ENCODE measurements at regions of chr19 and their contacts with region 1.

Region 1: DNA sequence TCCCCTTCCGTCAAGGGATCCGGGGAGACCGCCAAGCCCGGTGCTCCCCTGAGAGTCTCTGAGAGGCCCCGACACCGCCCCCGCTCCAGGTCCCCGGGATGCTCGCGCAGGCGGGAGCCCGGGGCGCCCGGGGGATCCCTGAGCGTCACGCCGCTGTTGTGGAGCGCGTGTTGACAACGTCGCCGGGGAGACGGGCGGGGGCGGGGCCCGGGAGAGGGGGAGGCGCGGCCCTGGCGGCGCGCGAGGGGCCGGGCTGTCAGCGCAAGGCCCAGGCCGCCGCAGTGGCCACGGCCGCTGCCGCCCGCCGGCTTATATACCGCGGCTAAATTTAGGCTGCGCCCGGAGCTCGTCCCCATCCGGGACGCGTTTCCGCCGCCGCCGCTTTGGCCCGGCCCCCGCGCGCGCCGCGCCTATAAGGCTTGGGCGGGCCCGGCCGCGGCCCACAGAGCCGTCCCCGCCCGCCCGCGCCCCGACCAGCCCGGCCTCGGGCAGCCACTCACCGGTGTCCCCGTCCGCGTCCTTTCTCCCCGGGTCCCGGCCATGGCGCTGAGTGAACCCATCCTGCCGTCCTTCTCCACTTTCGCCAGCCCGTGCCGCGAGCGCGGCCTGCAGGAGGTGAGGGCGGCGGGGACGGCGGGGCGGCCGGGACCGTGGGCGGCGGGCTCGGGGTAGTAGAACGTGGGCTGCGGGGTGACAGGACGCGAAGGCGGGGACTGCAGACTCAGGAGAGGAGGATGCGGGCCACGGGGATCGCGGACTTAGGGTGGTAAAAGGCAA is at the start of gene KLF2:
- DNase-seq: peak; percentile 83 to 93 (median 90)
- ATAC-seq: peak; percentile 93
- H3K4me3 ChIP-seq: peak within 1 kb of the TSS; percentile 52
- H3K27ac ChIP-seq: no peak within 1 kb of the TSS
- H3K4me1 ChIP-seq: peaks cover 0 to 26% of the 10 kb centered on the region in 2 experiments; a peak in 3 of 5 replicates
- H3K27me3 ChIP-seq: peaks cover 13 to 53% of the 10 kb centered on the region in 2 experiments; a peak in 3 of 5 replicates
- CTCF ChIP-seq: no peak
- EP300 ChIP-seq: no peak
- POLR2A ChIP-seq: no peak
- RAD21 ChIP-seq: no peak; a peak in 1 of 4 replicates
- polyA plus RNA-seq, gene KLF2: not detected

Region 2: DNA sequence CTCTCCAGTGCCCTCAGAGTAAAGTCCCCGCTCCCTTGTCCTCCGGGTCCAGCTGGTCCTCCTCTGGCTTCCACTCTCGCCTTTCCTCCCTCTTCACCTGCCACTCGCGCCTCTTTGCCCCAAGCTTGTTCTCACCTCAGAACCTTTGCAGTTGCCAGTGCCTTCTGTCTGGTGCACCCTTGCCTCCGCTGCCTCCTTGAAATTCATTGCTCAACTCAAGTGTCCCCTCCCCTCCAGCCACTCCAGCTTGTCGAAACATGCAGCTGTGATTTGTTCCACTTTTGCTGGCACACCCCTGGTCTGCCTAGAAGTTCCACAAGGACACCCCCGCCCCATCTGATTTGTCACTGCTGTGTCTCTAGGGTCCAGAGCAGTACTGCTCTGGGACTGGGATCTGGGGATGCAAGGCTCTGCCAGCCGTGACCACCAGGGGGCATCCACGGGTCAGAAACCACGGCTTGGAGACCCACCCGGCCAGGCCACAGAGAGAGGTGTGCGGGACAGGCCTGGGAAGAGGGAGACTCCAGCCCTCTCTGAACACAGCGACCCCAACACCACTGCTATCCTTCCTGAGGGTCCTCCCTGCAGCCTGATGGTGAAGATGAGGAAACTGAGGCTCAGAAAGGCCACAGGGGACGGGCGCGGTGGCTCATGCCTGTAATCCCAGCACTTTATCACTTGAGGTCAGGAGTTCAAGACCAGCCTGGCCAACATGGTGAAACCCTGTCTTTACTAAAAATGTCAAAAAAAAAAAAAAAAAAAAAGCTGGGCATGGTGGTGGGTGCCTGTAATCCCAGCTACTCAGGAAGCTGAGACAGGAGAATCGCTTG is 77.0 kb before region 1 on chr19:
- CTCF ChIA-PET with region 1: interaction called, 6 read pairs
- POLR2A ChIA-PET with region 1: no interaction called
- in situ Hi-C with region 1: no loop called
- intact Hi-C with region 1: loop called (anchors 5 kb)
- DNase-seq: peak; percentile 86 to 90 (median 89)
- ATAC-seq: peak; percentile 100
- H3K4me3 ChIP-seq: no peak overlapping the region
- H3K27ac ChIP-seq: no peak overlapping the region
- H3K4me1 ChIP-seq: peaks cover 0 to 9% of the 10 kb centered on the region in 2 experiments; a peak in 2 of 5 replicates
- H3K27me3 ChIP-seq: no peaks in the 10 kb centered on the region
- CTCF ChIP-seq: peak; percentile 94 to 96 (median 94)
- EP300 ChIP-seq: 0 out of 2 replicates have a peak, but pooled peaks have one; percentile 26
- POLR2A ChIP-seq: no peak
- RAD21 ChIP-seq: peak; percentile 97 to 99